WTC11 (cell line): ENCODE measurements at regions of chr11 and their contacts with region 1.

Region 1: DNA sequence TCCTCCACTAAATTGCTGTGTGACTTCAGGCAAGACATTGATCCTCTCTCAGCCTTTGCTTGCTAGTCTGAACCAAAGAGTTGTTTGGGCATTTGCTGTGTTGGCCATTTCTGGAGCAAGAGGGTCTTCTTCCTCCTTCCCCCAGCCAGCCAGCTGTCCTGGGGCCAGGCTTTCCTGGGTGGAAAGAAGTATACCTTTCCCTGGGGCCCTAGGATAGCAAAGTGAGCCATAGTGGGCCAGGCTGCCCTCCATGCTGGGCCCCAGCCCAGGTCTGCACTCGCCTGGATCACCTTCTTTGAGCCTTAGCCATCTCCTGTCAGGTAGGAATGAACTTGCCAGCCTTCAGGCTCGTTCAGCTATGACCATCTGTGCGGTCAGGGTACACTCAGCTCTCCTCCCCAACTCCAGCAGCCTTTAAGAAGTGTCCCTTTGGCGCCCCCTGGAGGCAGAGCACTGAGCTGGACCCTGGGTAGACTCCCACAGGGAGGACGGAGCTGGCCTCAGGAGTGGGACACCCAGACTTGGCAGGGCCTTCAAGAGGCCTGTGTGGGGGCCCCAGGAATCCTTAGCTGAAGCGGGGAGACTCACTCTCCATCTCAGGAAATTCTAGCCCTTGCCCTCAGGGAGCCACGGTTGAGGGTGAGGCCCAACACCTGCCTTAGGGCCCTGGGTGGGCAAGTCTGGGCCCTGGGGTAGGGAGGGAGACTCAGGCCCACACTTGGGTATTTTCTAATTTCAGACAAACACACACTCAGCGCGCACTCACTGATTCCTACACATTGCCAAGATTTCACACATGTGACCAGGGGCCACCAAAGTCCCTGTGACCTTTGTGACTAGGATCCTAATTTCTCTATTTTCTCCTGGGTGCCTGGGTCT is 35.6 kb upstream of the TPBGL start:
- DNase-seq: peak; percentile 94
- ATAC-seq: peak; percentile 95
- H3K4me3 Mint-ChIP-seq: no peak overlapping the region
- H3K27ac Mint-ChIP-seq: no peak overlapping the region
- H3K4me1 Mint-ChIP-seq: peaks cover 28% of the 10 kb centered on the region
- H3K27me3 Mint-ChIP-seq: no peaks in the 10 kb centered on the region; the same call in 1 of the 2 replicates
- CTCF ChIP-seq: peak; percentile 95

Region 2: DNA sequence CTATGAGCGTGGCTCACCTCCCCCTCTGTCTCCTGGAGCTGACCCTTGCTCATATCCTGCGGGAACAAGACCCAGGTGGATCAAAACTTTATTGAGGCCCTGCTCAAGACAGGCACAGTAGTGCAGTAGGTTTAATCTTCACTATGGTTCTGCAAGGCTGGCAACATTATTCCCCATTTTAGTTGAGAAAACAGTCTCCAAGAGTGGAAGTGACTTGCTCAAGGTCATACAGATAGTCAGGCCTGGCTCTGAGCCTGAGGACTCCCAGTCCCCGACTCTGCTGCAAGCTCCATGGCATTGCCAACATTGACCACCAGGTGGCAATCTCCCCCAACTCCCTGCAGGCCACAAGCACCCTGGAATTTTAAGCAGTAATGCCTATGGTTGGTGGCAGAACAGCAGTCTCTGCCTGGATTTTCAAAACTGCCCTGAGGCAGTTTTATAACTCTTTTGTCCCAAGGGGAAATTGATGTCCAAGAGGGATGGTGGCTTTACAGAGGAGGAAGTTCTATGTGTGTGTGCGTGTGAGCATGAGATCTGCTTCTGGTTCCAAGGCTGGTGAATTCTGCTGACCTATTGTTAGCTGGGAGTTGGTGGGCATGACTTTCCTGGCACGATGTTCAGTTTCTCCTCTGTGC is 182.0 kb before region 1 on chr11:
- CTCF ChIA-PET with region 1: interaction called, 30 read pairs
- POLR2A ChIA-PET with region 1: no interaction called
- DNase-seq: peak; percentile 91
- ATAC-seq: peak; percentile 99
- H3K4me3 Mint-ChIP-seq: no peak overlapping the region
- H3K27ac Mint-ChIP-seq: no peak overlapping the region
- H3K4me1 Mint-ChIP-seq: no peaks in the 10 kb centered on the region
- H3K27me3 Mint-ChIP-seq: peaks cover 4% of the 10 kb centered on the region
- CTCF ChIP-seq: peak; percentile 97

Region 3: DNA sequence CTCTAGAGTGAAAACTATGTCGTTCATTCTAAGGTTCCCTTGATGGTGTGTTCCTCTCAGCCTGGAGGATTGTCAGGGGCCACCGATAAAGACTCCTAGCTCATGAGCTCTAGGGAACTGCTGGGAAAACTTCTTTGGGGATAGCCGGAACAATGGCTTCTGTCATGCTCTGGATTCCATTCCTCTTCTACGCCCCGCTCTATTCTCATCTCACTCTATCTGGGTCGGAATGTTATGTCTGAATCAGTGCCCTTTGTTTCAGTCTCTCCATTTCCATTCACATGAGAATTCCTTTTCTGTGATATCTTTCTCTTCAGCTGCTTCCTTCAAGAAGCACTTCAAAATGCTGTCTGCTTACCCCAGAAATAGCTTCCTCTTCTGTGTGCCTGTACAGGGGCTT is 70.9 kb before region 1 on chr11:
- CTCF ChIA-PET with region 1: interaction called, 590 read pairs
- POLR2A ChIA-PET with region 1: no interaction called
- DNase-seq: no peak
- ATAC-seq: no peak; the same call in 1 of the 2 replicates
- H3K4me3 Mint-ChIP-seq: no peak overlapping the region
- H3K27ac Mint-ChIP-seq: no peak overlapping the region
- H3K4me1 Mint-ChIP-seq: no peaks in the 10 kb centered on the region
- H3K27me3 Mint-ChIP-seq: peaks cover 18% of the 10 kb centered on the region
- CTCF ChIP-seq: no peak

Region 4: GRCh38 chr11:75160192-75160757 is 44.6 kb before region 1 on chr11:
- CTCF ChIA-PET with region 1: interaction called, 32 read pairs
- POLR2A ChIA-PET with region 1: no interaction called
- DNase-seq: no peak
- ATAC-seq: no peak
- H3K4me3 Mint-ChIP-seq: no peak overlapping the region
- H3K27ac Mint-ChIP-seq: no peak overlapping the region
- H3K4me1 Mint-ChIP-seq: peaks cover 11% of the 10 kb centered on the region
- H3K27me3 Mint-ChIP-seq: no peaks in the 10 kb centered on the region
- CTCF ChIP-seq: no peak

Region 5: DNA sequence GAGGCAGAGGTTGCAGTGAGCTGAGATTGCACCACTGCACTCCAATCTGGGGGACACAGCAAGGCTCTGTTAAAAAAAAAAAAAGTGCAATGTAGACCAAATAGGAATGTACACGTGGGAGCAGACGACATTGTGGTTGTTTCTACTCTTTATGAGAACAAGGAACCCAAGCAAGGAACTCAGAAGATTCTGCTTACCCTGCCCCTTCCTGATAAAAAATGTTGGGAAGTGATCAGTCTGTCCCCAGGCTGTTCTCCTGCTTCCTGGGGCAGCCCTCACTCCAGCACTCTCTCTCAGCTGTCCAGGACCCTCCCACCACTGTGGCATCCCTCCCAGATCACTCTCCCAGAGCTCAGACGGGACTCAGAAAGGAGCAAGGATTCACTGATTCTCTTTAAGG is 22.3 kb before region 1 on chr11:
- CTCF ChIA-PET with region 1: interaction called, 16 read pairs
- POLR2A ChIA-PET with region 1: interaction called, 3 read pairs
- DNase-seq: no peak
- ATAC-seq: no peak
- H3K4me3 Mint-ChIP-seq: no peak overlapping the region
- H3K27ac Mint-ChIP-seq: no peak overlapping the region
- H3K4me1 Mint-ChIP-seq: peaks cover 15% of the 10 kb centered on the region
- H3K27me3 Mint-ChIP-seq: no peaks in the 10 kb centered on the region
- CTCF ChIP-seq: no peak

Region 6: DNA sequence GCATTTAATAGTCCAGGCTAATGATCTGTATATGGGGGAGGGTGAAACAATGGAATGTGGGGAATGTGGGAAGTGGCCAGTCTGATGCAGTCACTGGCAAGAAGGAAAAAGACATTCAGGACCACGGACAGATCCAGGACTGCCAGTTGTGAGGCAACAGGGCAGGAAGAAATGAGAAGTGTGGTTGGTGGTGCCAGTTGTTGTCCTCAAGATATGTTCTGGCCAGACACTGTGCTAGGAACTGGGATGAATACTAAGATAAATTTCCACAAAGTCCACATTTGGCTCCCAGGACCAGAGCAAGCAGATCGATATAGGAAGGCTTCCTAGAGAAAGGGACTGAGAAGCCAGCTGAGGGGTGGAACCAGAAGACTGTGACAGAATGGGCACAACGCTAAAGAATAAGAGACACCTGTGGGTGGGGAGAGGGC is 28.8 kb after region 1 on chr11:
- CTCF ChIA-PET with region 1: interaction called, 111 read pairs
- POLR2A ChIA-PET with region 1: no interaction called
- DNase-seq: peak; percentile 71
- ATAC-seq: peak; percentile 88
- H3K4me3 Mint-ChIP-seq: no peak overlapping the region
- H3K27ac Mint-ChIP-seq: no peak overlapping the region
- H3K4me1 Mint-ChIP-seq: peaks cover 14% of the 10 kb centered on the region
- H3K27me3 Mint-ChIP-seq: peaks cover 16% of the 10 kb centered on the region
- CTCF ChIP-seq: no peak

Region 7: GRCh38 chr11:75248690-75249268 is 43.9 kb after region 1 on chr11:
- CTCF ChIA-PET with region 1: interaction called, 111 read pairs
- POLR2A ChIA-PET with region 1: no interaction called
- DNase-seq: peak; percentile 94
- ATAC-seq: peak; percentile 89
- H3K4me3 Mint-ChIP-seq: no peak overlapping the region
- H3K27ac Mint-ChIP-seq: no peak overlapping the region
- H3K4me1 Mint-ChIP-seq: no peaks in the 10 kb centered on the region
- H3K27me3 Mint-ChIP-seq: peaks cover 68% of the 10 kb centered on the region
- CTCF ChIP-seq: peak; percentile 86